Activated T-helper 1 cell treated with anti-CD3 and anti-CD28 coated beads, Interleukin-12 subunit alpha, Interleukin-12 subunit beta, Interleukin-2, Interleukin-4 antibody, amounts not matched to agents 30 ng/mL and 10 ng/mL and 1 ng/mL, durations not matched to agents 14 hours and 24 hours and 36 hours (primary cell): ENCODE measurements at regions of chr15 and their contacts with region 1.

Region 1: DNA sequence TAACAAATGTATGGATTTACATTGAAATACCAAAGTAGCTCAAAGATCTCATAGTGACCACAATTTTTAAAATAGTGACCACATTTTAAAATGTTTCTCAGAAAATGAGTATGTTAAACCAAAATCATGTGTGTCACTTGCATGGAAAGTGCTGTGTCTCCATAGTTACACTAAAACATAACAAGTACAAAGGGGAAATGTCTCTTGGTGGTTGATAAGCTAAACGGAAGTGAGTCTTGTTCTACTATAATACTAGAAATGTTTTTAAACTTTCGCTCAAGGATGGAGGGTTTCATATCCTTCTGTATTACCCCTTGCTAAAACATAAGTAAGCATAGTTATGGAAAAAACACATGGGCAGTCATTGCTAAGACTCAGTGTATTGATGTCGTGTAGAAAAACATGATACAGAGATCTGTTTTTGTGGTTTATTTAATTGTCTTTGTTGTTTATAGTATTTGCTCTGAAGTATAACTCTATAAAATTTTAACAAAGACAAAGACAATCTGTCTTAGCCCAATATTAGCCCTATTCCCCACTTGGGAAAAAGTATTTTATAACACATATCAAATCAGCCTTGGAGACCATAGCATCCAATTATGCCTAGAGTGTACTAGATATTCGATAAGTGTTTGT is 27.0 kb upstream of the DENND4A start:
- DNase-seq: peak; percentile 25
- H3K4me3 Mint-ChIP-seq: peak overlapping the region; percentile 31
- H3K27ac Mint-ChIP-seq: peak overlapping the region; percentile 91
- H3K4me1 Mint-ChIP-seq: peaks cover 57% of the 10 kb centered on the region
- H3K27me3 Mint-ChIP-seq: no peaks in the 10 kb centered on the region

Region 2: GRCh38 chr15:65712415-65712814 is 106.6 kb before region 1 on chr15:
- intact Hi-C with region 1: loop called (anchors 5 kb)
- DNase-seq: no peak
- H3K4me3 Mint-ChIP-seq: no peak overlapping the region
- H3K27ac Mint-ChIP-seq: no peak overlapping the region
- H3K4me1 Mint-ChIP-seq: no peaks in the 10 kb centered on the region
- H3K27me3 Mint-ChIP-seq: no peaks in the 10 kb centered on the region

Region 3: GRCh38 chr15:65743637-65744252 is 75.3 kb before region 1 on chr15:
- intact Hi-C with region 1: no loop called
- DNase-seq: no peak
- H3K4me3 Mint-ChIP-seq: no peak overlapping the region
- H3K27ac Mint-ChIP-seq: peak overlapping the region; percentile 13
- H3K4me1 Mint-ChIP-seq: peaks cover 19% of the 10 kb centered on the region
- H3K27me3 Mint-ChIP-seq: no peaks in the 10 kb centered on the region

Region 4: GRCh38 chr15:65773386-65774111 is 45.5 kb before region 1 on chr15:
- intact Hi-C with region 1: loop called (anchors 1 kb)
- DNase-seq: no peak
- H3K4me3 Mint-ChIP-seq: peak overlapping the region; percentile 15
- H3K27ac Mint-ChIP-seq: peak overlapping the region; percentile 74
- H3K4me1 Mint-ChIP-seq: peaks cover 40% of the 10 kb centered on the region
- H3K27me3 Mint-ChIP-seq: no peaks in the 10 kb centered on the region

Region 5: DNA sequence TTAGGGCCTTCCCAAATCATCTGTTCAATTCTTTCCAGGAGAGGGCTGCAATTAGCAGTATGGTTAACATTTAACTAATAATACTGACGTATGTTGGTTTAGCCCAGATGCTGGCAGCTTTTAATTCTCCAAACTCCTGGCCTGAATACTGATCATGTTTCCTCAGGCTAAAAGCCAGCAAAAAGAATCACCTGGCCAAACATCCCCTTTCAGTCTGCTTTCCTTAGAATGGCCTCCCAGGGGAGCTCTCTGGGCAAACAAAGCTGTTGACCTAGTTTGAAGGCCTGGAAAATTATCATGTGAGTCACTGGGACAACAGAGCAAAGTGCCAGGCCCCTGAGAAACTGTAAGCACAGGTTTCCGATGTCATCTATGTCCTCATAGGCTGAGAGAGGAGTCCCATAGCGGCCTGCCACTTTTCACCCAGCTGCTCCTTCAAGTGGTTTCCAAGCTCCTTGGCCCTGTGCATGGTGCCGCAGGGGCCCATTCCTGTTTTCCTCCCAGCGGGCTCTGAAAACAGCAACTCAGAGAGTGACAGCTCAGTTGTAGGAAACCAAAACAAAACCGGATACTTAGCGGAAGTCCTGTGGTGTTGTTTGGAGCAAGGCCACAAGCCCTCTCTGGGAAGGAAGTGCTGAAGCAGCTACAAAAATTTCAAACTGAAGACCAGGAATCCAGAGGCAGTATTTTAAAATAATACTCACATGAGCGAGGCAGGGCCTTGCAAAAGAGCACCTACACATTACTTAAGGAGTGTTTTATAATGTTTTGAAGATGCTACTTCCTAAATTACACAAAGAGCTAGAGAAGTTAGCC is 13.7 kb after region 1 on chr15:
- intact Hi-C with region 1: loop called (anchors 1 kb)
- DNase-seq: peak; percentile 50
- H3K4me3 Mint-ChIP-seq: peak overlapping the region; percentile 77
- H3K27ac Mint-ChIP-seq: peak overlapping the region; percentile 96
- H3K4me1 Mint-ChIP-seq: peaks cover 54% of the 10 kb centered on the region
- H3K27me3 Mint-ChIP-seq: no peaks in the 10 kb centered on the region

Region 6: DNA sequence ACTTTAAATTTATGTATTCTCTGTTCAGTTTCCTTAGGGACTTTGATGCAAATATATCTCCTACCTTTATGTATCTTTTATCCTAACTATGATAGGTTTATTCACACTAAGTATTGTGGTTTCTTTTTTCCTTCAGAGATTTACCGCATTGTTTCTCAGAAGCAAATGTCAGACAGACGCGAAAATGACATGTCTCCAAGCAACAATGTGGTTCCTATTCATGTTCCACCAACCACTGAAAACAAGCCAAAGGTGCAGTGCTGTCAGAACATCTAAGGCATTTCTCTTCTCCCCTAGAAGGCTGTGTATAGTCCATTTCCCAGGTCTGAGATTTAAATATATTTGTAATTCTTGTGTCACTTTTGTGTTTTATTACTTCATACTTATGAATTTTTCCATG is 68.5 kb after region 1 on chr15:
- intact Hi-C with region 1: loop called (anchors 1 kb)
- DNase-seq: peak; percentile 64
- H3K4me3 Mint-ChIP-seq: peak overlapping the region; percentile 65
- H3K27ac Mint-ChIP-seq: peak overlapping the region; percentile 90
- H3K4me1 Mint-ChIP-seq: peaks cover 86% of the 10 kb centered on the region
- H3K27me3 Mint-ChIP-seq: no peaks in the 10 kb centered on the region